Posterior vena cava (tissue), 2 donors: ENCODE measurements at regions of chr9 and their contacts with region 1.

Region 1: DNA sequence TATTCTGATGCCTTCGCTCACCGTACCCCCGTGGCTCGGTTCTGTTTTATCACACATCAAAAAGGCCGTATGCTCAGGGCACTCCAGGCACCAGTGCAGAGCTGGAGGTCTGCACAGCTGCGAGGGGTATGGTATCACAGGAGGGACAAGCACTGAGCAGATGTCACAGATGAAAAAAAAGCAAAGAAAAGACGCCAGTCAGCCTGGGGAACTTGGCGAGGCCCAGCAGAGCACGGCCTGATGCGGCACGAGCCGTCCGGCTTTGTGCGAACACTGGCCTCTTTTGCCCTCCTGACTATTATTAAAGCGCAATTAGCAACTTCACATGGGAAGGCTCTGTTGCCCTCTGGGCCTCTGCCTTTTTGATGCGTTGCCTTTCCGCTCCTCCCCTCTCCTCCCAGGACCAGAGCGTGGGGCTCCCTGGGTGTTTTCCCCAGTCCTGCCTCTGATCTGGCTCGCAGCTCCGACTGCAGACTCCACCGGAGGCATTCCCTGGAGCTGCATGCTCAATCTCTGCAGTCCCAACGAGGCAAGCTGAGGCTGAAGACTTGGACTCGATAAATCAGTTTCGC is 44.4 kb downstream of the AK8 start:
- DNase-seq: no peak

Region 2: DNA sequence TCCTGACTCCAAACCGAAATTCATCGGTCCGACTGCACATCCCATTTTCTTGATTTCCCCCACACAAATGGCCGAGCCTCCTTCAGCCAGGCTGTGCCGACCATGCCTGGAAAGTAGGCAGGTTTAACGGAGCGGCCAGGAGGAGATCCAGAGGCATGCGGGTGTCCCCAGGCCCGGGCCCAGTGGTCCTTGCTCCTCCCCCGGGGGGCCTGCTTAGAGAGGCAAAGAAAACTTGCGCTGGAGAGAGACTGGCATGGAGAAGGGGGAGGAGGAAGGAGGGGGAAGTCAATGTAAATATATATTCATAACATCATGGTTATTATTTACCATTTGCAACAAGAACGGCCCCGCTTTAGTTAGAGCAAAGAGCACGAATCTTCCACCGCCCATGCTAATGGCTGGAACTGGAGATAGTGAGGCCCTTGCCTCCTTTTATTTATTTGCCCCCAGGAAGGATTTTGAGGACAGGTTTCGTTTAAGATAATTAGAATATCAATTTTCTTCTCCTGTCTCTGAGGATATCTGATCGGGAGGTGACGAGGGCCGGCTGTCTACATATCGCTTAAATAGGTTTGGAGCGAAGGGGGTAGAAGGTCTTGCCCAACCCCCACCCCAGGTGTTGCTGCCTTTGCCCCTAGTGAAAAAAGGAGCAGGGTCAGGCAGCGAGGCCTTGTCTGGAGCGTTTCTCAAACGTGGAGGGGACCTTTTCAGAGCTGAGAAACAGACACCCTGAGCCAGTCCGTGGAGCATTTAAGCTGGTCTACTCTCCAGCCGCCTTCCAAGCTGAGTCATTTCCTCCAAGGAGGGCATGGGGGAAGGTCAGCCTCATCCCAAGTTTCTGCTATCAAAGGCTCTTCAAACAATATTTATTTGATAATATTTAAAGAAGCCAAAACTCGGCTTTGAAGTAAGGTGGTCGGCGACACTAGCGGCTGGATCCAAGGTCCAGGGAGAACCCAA is 248.8 kb before region 1 on chr9:
- intact Hi-C with region 1: no loop called
- DNase-seq: peak; percentile 47

Region 3: DNA sequence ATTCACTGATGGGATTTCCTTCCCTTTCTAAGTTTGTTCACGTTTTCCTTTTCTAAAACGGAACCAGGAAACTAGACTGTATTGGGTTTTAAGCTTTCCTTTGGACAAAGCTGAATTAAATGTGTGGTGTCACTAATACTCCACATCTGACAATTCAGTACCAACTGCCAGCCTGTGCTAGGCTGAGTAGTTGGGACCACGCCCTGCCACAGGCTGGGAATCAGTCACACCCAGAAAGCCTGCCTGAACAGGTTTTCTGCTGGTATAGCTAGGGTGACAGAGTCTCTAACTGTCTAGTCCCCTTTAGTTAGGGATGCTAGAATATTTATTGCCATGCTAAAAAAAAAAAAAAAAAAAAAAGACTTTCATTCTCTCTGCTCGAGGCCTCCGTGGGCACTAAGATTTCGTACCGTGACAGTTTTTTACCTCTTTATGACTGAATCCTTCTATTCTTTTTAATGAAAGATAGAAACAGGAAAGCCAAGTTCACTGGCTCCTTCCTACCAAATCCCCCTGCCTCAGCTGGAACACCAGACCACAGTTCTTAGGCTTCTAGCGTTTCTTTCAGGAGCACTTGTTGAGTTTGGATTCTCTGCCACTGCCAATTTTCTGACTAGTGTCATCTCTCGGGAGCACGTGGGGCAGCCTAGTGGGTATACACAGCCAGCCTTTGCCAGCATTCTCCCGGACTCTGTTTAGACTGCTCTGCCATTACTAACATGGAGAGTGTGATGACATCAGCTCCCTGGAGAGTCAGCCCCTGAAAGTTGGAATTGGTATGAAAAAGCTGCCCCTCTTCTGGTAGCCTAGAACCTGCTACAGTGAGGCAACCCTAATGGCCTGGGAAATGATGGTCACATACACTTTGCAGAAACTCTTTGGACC is 61.0 kb after region 1 on chr9:
- intact Hi-C with region 1: loop called in 1 of 2 experiments (anchors 10 kb)
- DNase-seq: no peak